Caco-2 (cell line): ENCODE measurements at regions of chr10 and their contacts with region 1.

Region 1: GRCh38 chr10:34231441-34232180 is 583.5 kb downstream of the PARD3 start:
- DNase-seq: peak; percentile 68 to 79
- H3K4me3 ChIP-seq: no peak overlapping the region
- H3K4me3 Mint-ChIP-seq: peak overlapping the region; percentile 4
- H3K27ac Mint-ChIP-seq: peak overlapping the region; percentile 3
- H3K4me1 ChIP-seq: peaks cover 35% of the 10 kb centered on the region
- H3K4me1 Mint-ChIP-seq: peaks cover 23% of the 10 kb centered on the region
- H3K27me3 ChIP-seq: no peaks in the 10 kb centered on the region
- H3K27me3 Mint-ChIP-seq: no peaks in the 10 kb centered on the region
- CTCF ChIP-seq: no peak

Region 2: DNA sequence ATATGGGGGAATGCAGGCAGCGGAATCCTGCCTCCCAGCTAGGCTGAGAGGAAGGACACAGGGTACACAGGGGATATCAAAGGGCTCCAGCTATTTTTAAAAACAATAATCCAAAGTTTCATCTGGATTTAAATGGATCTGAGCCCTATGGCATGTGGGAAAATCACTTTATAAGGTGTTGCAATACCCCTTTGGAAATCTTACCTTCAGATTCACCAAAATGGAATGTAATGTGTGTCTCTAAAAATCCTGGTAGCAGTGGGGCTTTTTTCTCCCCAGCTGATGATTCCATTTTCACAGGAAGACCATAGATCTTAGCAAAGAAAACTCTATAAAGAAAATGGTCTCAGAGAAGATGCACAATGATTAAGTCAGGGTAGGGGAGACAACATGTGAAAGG is 138.7 kb before region 1 on chr10:
- CTCF ChIA-PET with region 1: no interaction called
- POLR2A ChIA-PET with region 1: no interaction called
- intact Hi-C with region 1: no loop called
- DNase-seq: no peak
- H3K4me3 ChIP-seq: no peak overlapping the region
- H3K4me3 Mint-ChIP-seq: no peak overlapping the region
- H3K27ac Mint-ChIP-seq: no peak overlapping the region
- H3K4me1 ChIP-seq: no peaks in the 10 kb centered on the region
- H3K4me1 Mint-ChIP-seq: no peaks in the 10 kb centered on the region
- H3K27me3 ChIP-seq: no peaks in the 10 kb centered on the region
- H3K27me3 Mint-ChIP-seq: no peaks in the 10 kb centered on the region
- CTCF ChIP-seq: no peak

Region 3: DNA sequence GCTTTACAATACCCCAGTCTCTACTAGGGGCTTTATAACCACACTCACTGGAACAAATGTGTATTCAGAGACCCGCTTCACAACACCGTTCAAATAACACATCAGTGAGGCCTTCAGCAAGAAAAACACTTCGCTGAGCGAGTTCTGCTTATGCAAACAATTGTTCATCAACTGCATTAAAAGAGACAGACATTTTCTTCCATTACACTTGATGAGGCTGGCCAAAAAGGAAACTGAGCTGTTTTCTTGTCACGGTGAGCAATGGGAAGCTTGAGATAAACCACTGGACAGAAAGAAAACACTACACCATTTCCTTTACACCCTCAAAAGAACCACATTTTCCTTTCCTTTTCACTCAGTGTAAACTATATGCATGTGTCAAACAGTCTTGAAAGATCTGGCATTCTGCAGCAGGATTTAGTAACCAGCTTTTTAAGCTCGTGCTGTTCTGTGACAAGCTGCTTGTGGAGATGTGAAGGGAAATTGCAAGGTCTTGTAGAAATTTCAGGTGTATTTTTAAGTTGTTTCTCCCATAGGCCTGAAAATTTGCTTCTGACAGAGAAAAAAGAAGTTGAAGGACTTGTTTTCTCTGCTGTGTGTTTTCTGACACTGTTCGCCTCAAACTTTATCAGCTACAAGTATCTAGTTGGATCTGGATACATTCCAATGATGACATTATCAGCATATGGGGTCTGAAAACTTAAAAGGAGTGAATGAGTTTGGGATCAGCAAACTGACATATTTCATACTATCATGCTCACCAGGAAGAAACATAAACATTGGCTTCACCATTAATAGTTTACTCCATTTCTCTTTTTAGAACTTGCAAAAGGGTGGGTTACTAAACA is 109.6 kb before region 1 on chr10:
- CTCF ChIA-PET with region 1: no interaction called
- POLR2A ChIA-PET with region 1: no interaction called
- intact Hi-C with region 1: loop called (anchors 5 kb)
- DNase-seq: no peak
- H3K4me3 ChIP-seq: no peak overlapping the region
- H3K4me3 Mint-ChIP-seq: peak overlapping the region; percentile 11
- H3K27ac Mint-ChIP-seq: peak overlapping the region; percentile 42
- H3K4me1 ChIP-seq: peaks cover 40% of the 10 kb centered on the region
- H3K4me1 Mint-ChIP-seq: peaks cover 42% of the 10 kb centered on the region
- H3K27me3 ChIP-seq: no peaks in the 10 kb centered on the region
- H3K27me3 Mint-ChIP-seq: no peaks in the 10 kb centered on the region
- CTCF ChIP-seq: no peak

Region 4: DNA sequence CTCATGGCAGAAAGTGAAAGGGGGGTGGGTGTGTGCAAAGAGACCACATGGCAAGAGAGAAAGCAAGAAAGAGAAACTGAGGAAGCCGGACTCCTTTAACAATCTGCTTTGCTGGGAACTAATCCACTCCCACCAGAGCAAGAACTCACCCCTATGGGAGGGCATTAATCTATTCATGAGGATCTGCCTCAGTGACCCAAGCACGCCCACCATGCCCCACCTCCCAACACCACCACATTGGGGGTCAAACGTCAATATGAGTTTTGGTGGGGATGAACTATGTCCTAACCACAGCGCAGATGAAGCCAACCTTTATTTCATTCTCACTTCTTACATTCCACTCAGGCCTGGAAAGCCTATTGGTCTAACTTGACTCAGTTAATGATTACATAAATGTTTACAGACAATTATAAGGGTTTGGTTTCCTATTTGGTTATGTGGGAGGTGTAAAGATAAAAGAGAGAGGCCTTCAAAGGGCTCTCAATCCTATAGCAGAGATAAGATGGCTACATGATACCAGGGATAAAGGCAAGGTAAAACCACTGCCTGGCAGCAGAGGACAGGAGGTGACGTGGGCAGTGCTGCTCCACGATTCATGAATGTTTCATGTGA is 18.3 kb before region 1 on chr10:
- CTCF ChIA-PET with region 1: interaction called, 4 read pairs
- POLR2A ChIA-PET with region 1: no interaction called
- intact Hi-C with region 1: loop called (anchors 1 kb)
- DNase-seq: peak; percentile 82 to 85
- H3K4me3 ChIP-seq: no peak overlapping the region
- H3K4me3 Mint-ChIP-seq: peak overlapping the region; percentile 51
- H3K27ac Mint-ChIP-seq: peak overlapping the region; percentile 79
- H3K4me1 ChIP-seq: peaks cover 47% of the 10 kb centered on the region
- H3K4me1 Mint-ChIP-seq: peaks cover 54% of the 10 kb centered on the region
- H3K27me3 ChIP-seq: no peaks in the 10 kb centered on the region
- H3K27me3 Mint-ChIP-seq: no peaks in the 10 kb centered on the region
- CTCF ChIP-seq: peak in 1 of 2 experiments; percentile 47

Region 5: GRCh38 chr10:34219753-34220548 is 11.7 kb before region 1 on chr10:
- CTCF ChIA-PET with region 1: interaction called, 4 read pairs
- POLR2A ChIA-PET with region 1: no interaction called
- intact Hi-C with region 1: loop called (anchors 1 kb)
- DNase-seq: no peak
- H3K4me3 ChIP-seq: no peak overlapping the region
- H3K4me3 Mint-ChIP-seq: no peak overlapping the region
- H3K27ac Mint-ChIP-seq: no peak overlapping the region
- H3K4me1 ChIP-seq: peaks cover 41% of the 10 kb centered on the region
- H3K4me1 Mint-ChIP-seq: peaks cover 50% of the 10 kb centered on the region
- H3K27me3 ChIP-seq: no peaks in the 10 kb centered on the region
- H3K27me3 Mint-ChIP-seq: no peaks in the 10 kb centered on the region
- CTCF ChIP-seq: no peak